GM23248 (cell line): ENCODE measurements at regions of chr6 and their contacts with region 1.

Region 1: GRCh38 chr6:135938576-135939207 is 87.2 kb downstream of the PDE7B start:
- DNase-seq: peak; percentile 75
- H3K4me3 ChIP-seq: no peak overlapping the region
- H3K27ac ChIP-seq: peak overlapping the region; percentile 2; the same call in 1 of the 2 replicates
- H3K4me1 ChIP-seq: peaks cover 32% of the 10 kb centered on the region
- H3K27me3 ChIP-seq: no peaks in the 10 kb centered on the region

Region 2: GRCh38 chr6:135535989-135536414 is 402.7 kb before region 1 on chr6:
- in situ Hi-C with region 1: loop called (anchors 25 kb)
- DNase-seq: peak; percentile 88
- H3K4me3 ChIP-seq: no peak overlapping the region
- H3K27ac ChIP-seq: peak overlapping the region; percentile 41
- H3K4me1 ChIP-seq: peaks cover 39% of the 10 kb centered on the region
- H3K27me3 ChIP-seq: no peaks in the 10 kb centered on the region

Region 3: GRCh38 chr6:136067731-136068341 is 129.1 kb after region 1 on chr6:
- in situ Hi-C with region 1: no loop called
- DNase-seq: peak; percentile 24
- H3K4me3 ChIP-seq: no peak overlapping the region
- H3K27ac ChIP-seq: peak overlapping the region; percentile 45; the same call in 1 of the 2 replicates
- H3K4me1 ChIP-seq: peaks cover 26% of the 10 kb centered on the region
- H3K27me3 ChIP-seq: no peaks in the 10 kb centered on the region